B cell (primary cell): ENCODE measurements at regions of chr19 and their contacts with region 1.

Region 1: GRCh38 chr19:40603389-40604135 is 2.4 kb downstream of the LTBP4 start:
- DNase-seq: peak; percentile 97
- ATAC-seq: peak; percentile 75
- H3K4me3 ChIP-seq: peak overlapping the region in 4 of 5 experiments; percentile 27 to 66 (median 34)
- H3K4me3 Mint-ChIP-seq: peak overlapping the region; percentile 87
- H3K27ac ChIP-seq: peak overlapping the region in 1 of 2 donors; percentile 32
- H3K27ac Mint-ChIP-seq: peak overlapping the region; percentile 83
- H3K4me1 ChIP-seq: peaks cover 69 to 76% of the 10 kb centered on the region in 2 donors
- H3K4me1 Mint-ChIP-seq: peaks cover 68% of the 10 kb centered on the region
- H3K27me3 ChIP-seq: peaks cover 0 to 43% (median 26%) of the 10 kb centered on the region in 4 experiments
- H3K27me3 Mint-ChIP-seq: peaks cover 23% of the 10 kb centered on the region
- CTCF ChIP-seq: no peak

Region 2: DNA sequence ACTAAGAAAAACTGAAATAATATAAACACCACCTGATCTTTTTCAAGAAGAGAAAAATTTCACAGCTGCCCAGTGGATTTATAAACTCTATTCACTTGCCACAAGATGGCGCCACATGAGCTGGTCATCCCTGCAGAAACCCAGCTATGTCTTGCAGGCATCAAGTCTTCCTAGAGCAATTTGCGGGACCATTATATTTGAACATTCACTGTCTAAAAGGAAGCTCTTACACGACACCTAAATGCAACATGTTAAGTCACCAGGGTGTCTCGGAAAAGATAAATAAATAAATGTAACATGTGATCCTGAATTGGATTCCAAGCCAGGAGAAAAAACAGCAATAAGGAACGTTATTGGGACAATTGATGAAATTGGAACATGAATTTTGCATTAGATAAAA is 298.2 kb before region 1 on chr19:
- CTCF ChIA-PET with region 1: interaction called, 32 read pairs
- POLR2A ChIA-PET with region 1: no interaction called
- intact Hi-C with region 1: no loop called
- DNase-seq: peak; percentile 84
- ATAC-seq: peak; percentile 68
- H3K4me3 ChIP-seq: no peak overlapping the region
- H3K4me3 Mint-ChIP-seq: no peak overlapping the region
- H3K27ac ChIP-seq: no peak overlapping the region
- H3K27ac Mint-ChIP-seq: no peak overlapping the region
- H3K4me1 ChIP-seq: peaks cover 0 to 3% of the 10 kb centered on the region in 2 donors
- H3K4me1 Mint-ChIP-seq: peaks cover 2% of the 10 kb centered on the region
- H3K27me3 ChIP-seq: no peaks in the 10 kb centered on the region
- H3K27me3 Mint-ChIP-seq: no peaks in the 10 kb centered on the region
- CTCF ChIP-seq: peak; percentile 88

Region 3: GRCh38 chr19:40570313-40571004 is 33.1 kb before region 1 on chr19:
- CTCF ChIA-PET with region 1: interaction called, 21 read pairs
- POLR2A ChIA-PET with region 1: interaction called, 19 read pairs
- intact Hi-C with region 1: loop called (anchors 1 kb)
- DNase-seq: peak; percentile 100
- ATAC-seq: peak; percentile 93
- H3K4me3 ChIP-seq: peak overlapping the region in 3 of 5 experiments; percentile 36 to 47 (median 37)
- H3K4me3 Mint-ChIP-seq: peak overlapping the region; percentile 70
- H3K27ac ChIP-seq: peak overlapping the region in 1 of 2 donors; percentile 33
- H3K27ac Mint-ChIP-seq: peak overlapping the region; percentile 83
- H3K4me1 ChIP-seq: peaks cover 24 to 27% of the 10 kb centered on the region in 2 donors
- H3K4me1 Mint-ChIP-seq: peaks cover 20% of the 10 kb centered on the region
- H3K27me3 ChIP-seq: peaks cover 0 to 32% (median 21%) of the 10 kb centered on the region in 4 experiments
- H3K27me3 Mint-ChIP-seq: peaks cover 4% of the 10 kb centered on the region
- CTCF ChIP-seq: peak; percentile 54

Region 4: DNA sequence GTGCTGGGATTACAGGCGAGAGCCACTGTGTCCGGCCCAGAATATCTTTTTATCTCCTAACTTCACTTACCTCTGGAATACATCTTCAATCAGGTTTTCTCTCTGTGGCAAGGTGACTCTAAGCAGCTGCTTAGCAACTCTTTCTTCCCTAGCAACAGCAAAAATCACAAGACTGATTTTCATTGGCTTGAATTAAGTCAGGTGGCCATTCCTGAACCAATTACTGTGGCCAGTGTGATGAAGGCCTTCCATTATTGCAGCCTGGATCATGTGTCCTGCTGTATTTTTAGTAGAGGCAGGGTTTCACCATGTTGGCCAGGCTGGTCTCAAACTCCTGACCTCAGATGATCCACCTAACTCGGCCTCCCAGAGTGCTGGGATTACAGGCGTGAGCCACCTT is 11.4 kb before region 1 on chr19:
- CTCF ChIA-PET with region 1: interaction called, 10 read pairs
- POLR2A ChIA-PET with region 1: no interaction called
- intact Hi-C with region 1: no loop called
- DNase-seq: peak; percentile 57
- ATAC-seq: peak; percentile 55
- H3K4me3 ChIP-seq: no peak overlapping the region
- H3K4me3 Mint-ChIP-seq: no peak overlapping the region
- H3K27ac ChIP-seq: no peak overlapping the region
- H3K27ac Mint-ChIP-seq: peak overlapping the region; percentile 8
- H3K4me1 ChIP-seq: peaks cover 5 to 7% of the 10 kb centered on the region in 2 donors
- H3K4me1 Mint-ChIP-seq: peaks cover 2% of the 10 kb centered on the region
- H3K27me3 ChIP-seq: peaks cover 0 to 16% (median 5%) of the 10 kb centered on the region in 4 experiments
- H3K27me3 Mint-ChIP-seq: peaks cover 4% of the 10 kb centered on the region
- CTCF ChIP-seq: no peak

Region 5: GRCh38 chr19:40747536-40747935 is 144.0 kb after region 1 on chr19:
- CTCF ChIA-PET with region 1: no interaction called
- POLR2A ChIA-PET with region 1: no interaction called
- intact Hi-C with region 1: no loop called
- DNase-seq: no peak
- ATAC-seq: no peak
- H3K4me3 ChIP-seq: no peak overlapping the region
- H3K4me3 Mint-ChIP-seq: no peak overlapping the region
- H3K27ac ChIP-seq: no peak overlapping the region
- H3K27ac Mint-ChIP-seq: no peak overlapping the region
- H3K4me1 ChIP-seq: peaks cover 14 to 28% of the 10 kb centered on the region in 2 donors
- H3K4me1 Mint-ChIP-seq: peaks cover 25% of the 10 kb centered on the region
- H3K27me3 ChIP-seq: no peaks in the 10 kb centered on the region
- H3K27me3 Mint-ChIP-seq: no peaks in the 10 kb centered on the region
- CTCF ChIP-seq: no peak